ENCODE measurements at regions of chr3 and their contacts with region 1.

Region 1: GRCh38 chr3:177359593-177360357 is 162.5 kb upstream of the TBL1XR1 start:
- DNase-seq: peak; percentile 94 to 98 (median 96)
- ATAC-seq: peak; percentile 82
- H3K4me3 ChIP-seq: peak overlapping the region; percentile 2 to 41
- H3K27ac ChIP-seq: peak overlapping the region; percentile 81 to 96
- H3K4me1 ChIP-seq: peaks cover 32 to 59% of the 10 kb centered on the region in 2 donors
- H3K27me3 ChIP-seq: no peaks in the 10 kb centered on the region
- CTCF ChIP-seq: no peak

Region 2: GRCh38 chr3:177050501-177051237 is 309.1 kb before region 1 on chr3:
- intact Hi-C with region 1: loop called in 1 of 2 experiments (anchors 2 kb)
- DNase-seq: peak in 1 of 4 donors; percentile 61
- ATAC-seq: peak; percentile 84
- H3K4me3 ChIP-seq: no peak overlapping the region
- H3K27ac ChIP-seq: no peak overlapping the region
- H3K4me1 ChIP-seq: peaks cover 0 to 14% of the 10 kb centered on the region in 2 donors
- H3K27me3 ChIP-seq: no peaks in the 10 kb centered on the region
- CTCF ChIP-seq: peak; percentile 40 to 47

Region 3: DNA sequence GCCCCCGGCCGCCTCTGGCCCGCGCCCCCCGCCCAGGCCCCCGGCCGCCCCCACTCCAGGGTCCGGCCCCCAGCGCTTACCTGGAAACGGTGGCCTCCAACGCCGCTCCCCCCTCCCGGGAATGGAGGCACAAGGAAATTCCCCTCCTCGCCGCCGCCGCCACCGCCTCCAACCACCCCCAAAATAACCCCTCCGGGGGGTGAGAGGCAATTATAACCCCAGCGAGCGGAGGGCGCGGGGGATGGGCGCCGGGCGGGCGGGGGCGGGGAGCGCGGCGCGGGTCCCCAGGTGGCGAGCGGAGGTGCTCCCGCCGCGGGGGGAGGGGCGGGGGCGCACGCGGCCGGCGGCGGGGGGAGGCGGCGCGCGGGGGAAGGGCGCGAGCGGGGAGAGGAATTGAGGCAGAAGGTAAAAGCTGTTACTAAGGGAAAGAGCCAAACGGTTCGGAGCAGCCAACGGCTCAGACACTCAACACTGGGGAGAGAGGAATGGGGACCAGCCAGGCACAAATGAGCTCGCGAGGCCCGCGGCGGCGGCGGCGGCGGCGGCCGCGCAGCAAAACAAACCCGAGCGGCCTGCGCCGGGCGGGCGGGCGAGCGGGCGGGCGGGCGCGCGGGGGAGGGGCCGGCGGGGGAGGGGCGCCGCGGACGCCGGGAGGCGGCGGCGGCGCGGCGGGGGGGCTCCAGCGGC is 162.6 kb before region 1 on chr3 and contains the start of gene TBL1XR1:
- intact Hi-C with region 1: loop called in 1 of 2 experiments (anchors 2 kb)
- DNase-seq: peak; percentile 92 to 96 (median 94)
- ATAC-seq: peak; percentile 76
- H3K4me3 ChIP-seq: peak within 1 kb of the TSS; percentile 72 to 74
- H3K27ac ChIP-seq: peak within 1 kb of the TSS; percentile 95 to 96
- H3K4me1 ChIP-seq: peaks cover 3 to 48% of the 10 kb centered on the region in 2 donors
- H3K27me3 ChIP-seq: no peaks in the 10 kb centered on the region
- CTCF ChIP-seq: no peak
- polyA plus RNA-seq, gene TBL1XR1: 116 to 202 (median 152) TPM

Measured in left lung (tissue), 14 donors.